MCF 10A (cell line): ENCODE measurements at regions of chr2 and their contacts with region 1.

Region 1: DNA sequence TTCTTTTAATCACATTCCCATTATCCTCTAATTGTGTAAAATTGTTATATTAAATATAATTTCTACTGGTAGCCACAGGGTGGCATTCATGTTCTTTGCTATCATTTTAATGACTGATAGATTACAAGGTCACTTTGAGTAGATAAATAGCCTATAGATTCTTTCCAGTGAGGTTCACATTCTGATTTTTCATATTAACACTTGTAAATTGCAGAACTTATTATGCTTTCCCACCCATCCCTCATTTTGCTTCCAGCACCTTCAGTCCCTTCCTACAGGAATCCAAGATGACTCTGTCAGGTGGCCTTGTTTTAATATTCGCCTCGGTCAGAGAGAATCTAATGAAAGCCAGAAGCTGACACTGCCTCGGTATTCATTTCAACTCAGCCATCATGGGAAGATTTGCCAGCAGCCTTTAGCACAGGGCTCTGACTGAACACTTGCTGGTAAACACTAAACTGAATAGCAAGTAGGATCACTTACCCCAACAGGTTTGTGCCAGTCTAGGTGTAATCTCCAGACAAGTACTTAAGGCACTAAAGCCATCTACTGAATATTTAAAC is 101.2 kb upstream of the FSHR start:
- DNase-seq: no peak
- H3K4me3 Mint-ChIP-seq: no peak overlapping the region
- H3K27ac Mint-ChIP-seq: no peak overlapping the region
- H3K4me1 Mint-ChIP-seq: peaks cover 5% of the 10 kb centered on the region
- H3K27me3 Mint-ChIP-seq: peaks cover 9% of the 10 kb centered on the region
- CTCF ChIP-seq: peak; percentile 28

Region 2: GRCh38 chr2:49332415-49332814 is 76.9 kb after region 1 on chr2:
- CTCF ChIA-PET with region 1: no interaction called
- POLR2A ChIA-PET with region 1: no interaction called
- intact Hi-C with region 1: no loop called
- DNase-seq: no peak
- H3K4me3 Mint-ChIP-seq: no peak overlapping the region
- H3K27ac Mint-ChIP-seq: no peak overlapping the region
- H3K4me1 Mint-ChIP-seq: no peaks in the 10 kb centered on the region
- H3K27me3 Mint-ChIP-seq: peaks cover 15% of the 10 kb centered on the region
- CTCF ChIP-seq: no peak

Region 3: GRCh38 chr2:49616800-49617199 is 361.3 kb after region 1 on chr2:
- CTCF ChIA-PET with region 1: interaction called, 3 read pairs
- POLR2A ChIA-PET with region 1: no interaction called
- intact Hi-C with region 1: loop called (anchors 2 kb)
- DNase-seq: peak; percentile 56
- H3K4me3 Mint-ChIP-seq: no peak overlapping the region
- H3K27ac Mint-ChIP-seq: no peak overlapping the region
- H3K4me1 Mint-ChIP-seq: no peaks in the 10 kb centered on the region
- H3K27me3 Mint-ChIP-seq: peaks cover 13% of the 10 kb centered on the region
- CTCF ChIP-seq: peak; percentile 49

Region 4: DNA sequence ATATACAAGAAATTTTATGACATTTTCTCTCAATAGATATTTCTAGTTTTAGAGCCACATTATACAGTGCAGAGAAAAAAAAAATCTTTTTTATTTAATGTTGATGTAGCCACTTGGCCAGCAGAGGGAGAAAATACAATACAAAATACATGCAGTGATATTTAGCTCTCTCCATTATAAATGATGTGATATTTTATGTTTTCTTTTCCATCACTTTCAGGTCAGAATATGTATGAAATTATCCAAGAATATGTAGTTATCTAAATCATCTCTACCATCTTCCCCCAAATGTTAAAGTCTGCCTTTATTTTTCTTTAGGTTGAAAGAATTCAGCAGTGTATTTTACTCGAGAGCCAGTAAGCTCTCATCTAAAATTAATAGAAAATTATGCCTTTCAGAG is 432.4 kb after region 1 on chr2:
- CTCF ChIA-PET with region 1: no interaction called
- POLR2A ChIA-PET with region 1: no interaction called
- intact Hi-C with region 1: loop called (anchors 10 kb)
- DNase-seq: no peak
- H3K4me3 Mint-ChIP-seq: no peak overlapping the region
- H3K27ac Mint-ChIP-seq: no peak overlapping the region
- H3K4me1 Mint-ChIP-seq: no peaks in the 10 kb centered on the region
- H3K27me3 Mint-ChIP-seq: peaks cover 22% of the 10 kb centered on the region
- CTCF ChIP-seq: peak; percentile 39